ENCODE measurements at regions of chr14 and their contacts with region 1.

Region 1: GRCh38 chr14:60164712-60165546 is at the start of gene DHRS7:
- DNase-seq: peak; percentile 84
- ATAC-seq: peak; percentile 91
- H3K4me3 ChIP-seq: peak within 1 kb of the TSS; percentile 81 to 93 (median 87)
- H3K4me3 Mint-ChIP-seq: peak within 1 kb of the TSS; percentile 95
- H3K27ac ChIP-seq: peak within 1 kb of the TSS; percentile 87 to 93
- H3K27ac Mint-ChIP-seq: peak within 1 kb of the TSS; percentile 99
- H3K4me1 ChIP-seq: peaks cover 20 to 21% of the 10 kb centered on the region in 2 donors
- H3K4me1 Mint-ChIP-seq: peaks cover 43% of the 10 kb centered on the region
- H3K27me3 ChIP-seq: no peaks in the 10 kb centered on the region
- H3K27me3 Mint-ChIP-seq: no peaks in the 10 kb centered on the region
- CTCF ChIP-seq: peak; percentile 11
- total RNA-seq, gene DHRS7: 44.7 and 47.5 TPM in 2 replicates

Region 2: DNA sequence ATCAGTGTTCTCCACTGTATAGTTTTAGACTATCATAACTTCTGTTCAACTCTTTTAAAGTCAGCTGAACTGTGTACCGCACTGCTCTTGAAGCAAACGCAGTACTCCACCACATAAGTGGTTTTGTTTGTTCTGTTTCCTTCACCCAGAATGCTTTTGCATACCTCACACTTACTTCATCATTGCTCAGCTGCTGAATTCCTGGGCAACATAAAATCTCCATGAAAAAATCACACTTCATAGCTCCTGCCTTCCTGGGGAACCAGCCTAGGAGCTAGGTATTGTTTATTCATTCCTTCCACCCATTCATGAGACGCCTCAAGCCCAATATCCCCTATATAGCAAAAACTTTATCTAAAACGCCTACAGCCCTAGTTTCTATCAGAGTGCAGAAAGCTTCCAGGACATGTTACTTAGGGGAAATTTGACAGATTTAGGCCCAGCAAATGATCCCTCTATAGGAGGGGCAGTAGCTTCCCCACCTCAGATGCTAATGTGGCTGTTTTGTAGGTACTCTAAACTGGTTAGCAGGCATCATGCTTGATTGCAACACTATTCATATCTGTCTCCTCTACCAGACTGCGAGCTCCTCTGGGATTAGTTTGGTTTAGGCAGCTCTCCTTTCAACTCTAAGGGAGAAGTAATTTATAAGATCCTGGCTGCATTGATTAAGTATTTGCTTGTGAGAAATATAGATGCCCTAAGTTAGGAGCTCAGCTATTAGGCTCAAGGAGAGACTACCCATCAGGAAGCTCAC is 200.5 kb before region 1 on chr14:
- CTCF ChIA-PET with region 1: interaction called, 44 read pairs
- POLR2A ChIA-PET with region 1: no interaction called
- intact Hi-C with region 1: loop called (anchors 1 kb)
- DNase-seq: no peak
- ATAC-seq: peak; percentile 11
- H3K4me3 ChIP-seq: peak overlapping the region in 3 of 5 experiments; percentile 18 to 63 (median 55)
- H3K4me3 Mint-ChIP-seq: peak overlapping the region; percentile 86
- H3K27ac ChIP-seq: peak overlapping the region; percentile 86
- H3K27ac Mint-ChIP-seq: peak overlapping the region; percentile 88
- H3K4me1 ChIP-seq: peaks cover 10 to 15% of the 10 kb centered on the region in 2 donors
- H3K4me1 Mint-ChIP-seq: peaks cover 13% of the 10 kb centered on the region
- H3K27me3 ChIP-seq: no peaks in the 10 kb centered on the region
- H3K27me3 Mint-ChIP-seq: no peaks in the 10 kb centered on the region
- CTCF ChIP-seq: no peak

Region 3: DNA sequence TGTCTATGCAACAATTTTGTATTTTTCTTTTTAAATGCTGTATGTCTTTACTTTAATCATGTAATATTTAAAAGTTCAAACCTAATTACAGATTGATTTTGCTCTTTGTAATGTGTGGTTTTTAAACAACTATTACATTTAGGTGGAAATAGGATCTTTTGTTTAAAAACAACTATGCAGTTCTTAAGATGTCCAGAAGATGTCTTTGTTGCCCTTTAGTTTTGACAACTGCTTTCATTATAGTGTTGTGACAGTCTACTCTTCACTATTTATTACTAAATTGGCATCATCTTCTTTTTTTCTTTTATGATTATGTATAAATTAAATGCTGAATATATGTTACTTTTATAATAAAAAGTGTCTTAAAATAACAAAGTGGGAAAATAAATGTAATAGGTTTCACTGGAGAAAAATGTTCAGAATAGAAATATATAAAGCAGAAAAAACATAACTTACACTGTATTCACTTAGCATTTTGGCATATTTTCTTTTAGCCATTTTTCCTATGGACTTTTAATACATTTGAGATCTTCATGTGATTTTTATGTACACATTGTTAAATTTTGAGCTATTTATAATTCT is 100.3 kb before region 1 on chr14:
- CTCF ChIA-PET with region 1: interaction called, 20 read pairs
- POLR2A ChIA-PET with region 1: no interaction called
- intact Hi-C with region 1: no loop called
- DNase-seq: peak; percentile 56
- ATAC-seq: peak; percentile 57
- H3K4me3 ChIP-seq: no peak overlapping the region
- H3K4me3 Mint-ChIP-seq: no peak overlapping the region
- H3K27ac ChIP-seq: no peak overlapping the region
- H3K27ac Mint-ChIP-seq: no peak overlapping the region
- H3K4me1 ChIP-seq: no peaks in the 10 kb centered on the region
- H3K4me1 Mint-ChIP-seq: no peaks in the 10 kb centered on the region
- H3K27me3 ChIP-seq: no peaks in the 10 kb centered on the region
- H3K27me3 Mint-ChIP-seq: peaks cover 6% of the 10 kb centered on the region
- CTCF ChIP-seq: peak; percentile 75

Region 4: GRCh38 chr14:60151715-60152114 is 13.2 kb before region 1 on chr14:
- CTCF ChIA-PET with region 1: interaction called, 6 read pairs
- POLR2A ChIA-PET with region 1: interaction called, 6 read pairs
- intact Hi-C with region 1: loop called (anchors 1 kb)
- DNase-seq: peak; percentile 73
- ATAC-seq: peak; percentile 97
- H3K4me3 ChIP-seq: no peak overlapping the region
- H3K4me3 Mint-ChIP-seq: no peak overlapping the region
- H3K27ac ChIP-seq: peak overlapping the region; percentile 50 to 86
- H3K27ac Mint-ChIP-seq: peak overlapping the region; percentile 85
- H3K4me1 ChIP-seq: peaks cover 12% of the 10 kb centered on the region in 2 donors
- H3K4me1 Mint-ChIP-seq: peaks cover 24% of the 10 kb centered on the region
- H3K27me3 ChIP-seq: no peaks in the 10 kb centered on the region
- H3K27me3 Mint-ChIP-seq: no peaks in the 10 kb centered on the region
- CTCF ChIP-seq: no peak

Region 5: GRCh38 chr14:60212503-60213371 is 47.8 kb after region 1 on chr14:
- CTCF ChIA-PET with region 1: no interaction called
- POLR2A ChIA-PET with region 1: no interaction called
- intact Hi-C with region 1: no loop called
- DNase-seq: peak; percentile 49
- ATAC-seq: peak; percentile 58
- H3K4me3 ChIP-seq: no peak overlapping the region
- H3K4me3 Mint-ChIP-seq: peak overlapping the region; percentile 11
- H3K27ac ChIP-seq: no peak overlapping the region
- H3K27ac Mint-ChIP-seq: no peak overlapping the region
- H3K4me1 ChIP-seq: no peaks in the 10 kb centered on the region
- H3K4me1 Mint-ChIP-seq: peaks cover 8% of the 10 kb centered on the region
- H3K27me3 ChIP-seq: peaks cover 0 to 4% (median 0%) of the 10 kb centered on the region in 4 experiments
- H3K27me3 Mint-ChIP-seq: peaks cover 5% of the 10 kb centered on the region
- CTCF ChIP-seq: no peak

Region 6: DNA sequence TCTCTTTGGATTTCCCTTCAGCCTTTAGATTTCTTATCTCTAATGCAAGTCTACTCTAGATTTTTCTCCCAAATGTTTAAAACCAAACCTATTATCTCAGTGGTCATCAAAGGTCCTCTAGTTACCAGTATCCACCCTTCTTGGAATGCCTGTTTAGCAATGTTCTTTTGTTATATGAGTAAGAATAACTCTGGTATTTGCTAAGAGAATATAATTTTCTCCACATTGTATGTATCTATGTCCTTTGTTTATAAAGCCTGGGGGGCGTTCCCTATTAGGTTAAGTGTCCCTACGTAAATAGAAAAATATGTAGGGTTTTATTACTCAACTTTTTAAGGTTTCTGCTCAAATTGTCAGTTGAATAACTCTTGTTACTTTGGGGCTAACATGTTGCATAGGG is 111.4 kb after region 1 on chr14:
- CTCF ChIA-PET with region 1: no interaction called
- POLR2A ChIA-PET with region 1: no interaction called
- intact Hi-C with region 1: no loop called
- DNase-seq: no peak
- ATAC-seq: no peak
- H3K4me3 ChIP-seq: no peak overlapping the region
- H3K4me3 Mint-ChIP-seq: no peak overlapping the region
- H3K27ac ChIP-seq: no peak overlapping the region
- H3K27ac Mint-ChIP-seq: no peak overlapping the region
- H3K4me1 ChIP-seq: peaks cover 11 to 16% of the 10 kb centered on the region in 2 donors
- H3K4me1 Mint-ChIP-seq: peaks cover 45% of the 10 kb centered on the region
- H3K27me3 ChIP-seq: no peaks in the 10 kb centered on the region
- H3K27me3 Mint-ChIP-seq: no peaks in the 10 kb centered on the region
- CTCF ChIP-seq: no peak